Caco-2 (cell line): ENCODE measurements at regions of chr17 and their contacts with region 1.

Region 1: DNA sequence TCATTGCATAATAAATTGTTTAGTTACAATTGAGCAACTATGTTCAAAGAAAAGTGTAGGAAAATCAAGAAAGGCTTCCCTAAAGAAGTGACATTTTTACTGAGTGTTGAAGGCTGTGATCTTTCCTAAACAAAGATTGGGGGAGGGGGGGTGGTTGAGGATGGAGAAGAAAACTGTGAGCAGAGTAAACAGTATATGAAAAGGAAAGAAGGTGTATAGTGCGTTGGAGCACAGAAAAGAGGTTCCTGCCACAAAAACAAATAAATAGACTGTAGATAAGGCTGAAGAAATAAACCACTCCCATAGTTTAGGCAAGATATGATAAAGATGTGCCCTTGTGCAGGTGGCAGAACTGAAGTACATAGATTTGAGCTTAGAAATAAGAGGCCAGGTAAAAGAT is 8.5 kb downstream of the ABCA10 start:
- DNase-seq: peak in 1 of 2 experiments; percentile 58
- H3K4me3 ChIP-seq: no peak overlapping the region
- H3K4me3 Mint-ChIP-seq: no peak overlapping the region
- H3K27ac Mint-ChIP-seq: no peak overlapping the region
- H3K4me1 ChIP-seq: no peaks in the 10 kb centered on the region
- H3K4me1 Mint-ChIP-seq: peaks cover 16% of the 10 kb centered on the region
- H3K27me3 ChIP-seq: no peaks in the 10 kb centered on the region
- H3K27me3 Mint-ChIP-seq: no peaks in the 10 kb centered on the region
- CTCF ChIP-seq: no peak

Region 2: DNA sequence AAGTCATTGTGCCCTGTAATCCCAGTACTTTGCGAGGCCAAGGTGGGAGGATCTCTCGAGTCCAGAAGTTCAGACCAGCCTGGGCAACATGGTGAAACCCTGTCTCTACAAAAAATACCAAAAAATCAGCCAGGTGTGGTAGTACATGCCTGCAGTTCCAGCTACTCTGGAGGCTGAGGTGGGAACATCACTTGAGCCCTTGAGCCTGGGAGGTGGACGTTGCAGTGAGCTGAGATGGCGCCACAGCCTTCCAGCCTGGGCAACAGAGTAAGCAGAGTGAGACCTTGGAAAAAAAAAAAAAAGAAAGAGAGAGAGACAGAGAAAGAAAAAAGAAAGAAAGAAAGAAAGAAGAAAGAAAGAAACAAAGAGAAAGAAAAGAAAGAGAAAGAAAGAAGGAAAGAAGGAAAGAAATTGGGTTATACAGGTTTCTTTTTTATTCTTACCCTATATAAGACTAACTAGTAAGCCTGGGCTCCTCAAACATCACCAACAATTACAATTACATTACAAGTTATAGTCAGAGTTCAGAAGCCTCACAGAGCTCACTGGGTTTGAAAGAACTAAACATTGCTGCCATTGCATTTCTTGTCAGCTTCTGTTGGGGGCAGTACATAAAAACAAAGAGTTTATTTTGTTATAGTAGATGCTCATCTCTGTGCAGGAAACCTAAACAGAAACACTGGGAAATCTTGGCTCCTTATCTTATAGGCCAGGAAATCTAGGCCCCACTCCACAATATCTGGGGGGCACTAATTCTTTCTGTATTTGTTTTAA is 152.6 kb before region 1 on chr17:
- CTCF ChIA-PET with region 1: no interaction called
- POLR2A ChIA-PET with region 1: no interaction called
- intact Hi-C with region 1: loop called (anchors 1 kb)
- DNase-seq: no peak
- H3K4me3 ChIP-seq: no peak overlapping the region
- H3K4me3 Mint-ChIP-seq: no peak overlapping the region
- H3K27ac Mint-ChIP-seq: no peak overlapping the region
- H3K4me1 ChIP-seq: peaks cover 20% of the 10 kb centered on the region; the same call in 1 of the 2 replicates
- H3K4me1 Mint-ChIP-seq: peaks cover 36% of the 10 kb centered on the region
- H3K27me3 ChIP-seq: no peaks in the 10 kb centered on the region
- H3K27me3 Mint-ChIP-seq: no peaks in the 10 kb centered on the region
- CTCF ChIP-seq: no peak

Region 3: GRCh38 chr17:69130627-69131296 is 89.3 kb before region 1 on chr17:
- CTCF ChIA-PET with region 1: no interaction called
- POLR2A ChIA-PET with region 1: no interaction called
- intact Hi-C with region 1: no loop called
- DNase-seq: no peak
- H3K4me3 ChIP-seq: no peak overlapping the region
- H3K4me3 Mint-ChIP-seq: no peak overlapping the region
- H3K27ac Mint-ChIP-seq: no peak overlapping the region
- H3K4me1 ChIP-seq: 0 out of 2 replicates have a peak, but pooled peaks cover 5% of the 10 kb centered on the region
- H3K4me1 Mint-ChIP-seq: no peaks in the 10 kb centered on the region
- H3K27me3 ChIP-seq: no peaks in the 10 kb centered on the region
- H3K27me3 Mint-ChIP-seq: no peaks in the 10 kb centered on the region
- CTCF ChIP-seq: no peak

Region 4: GRCh38 chr17:69335058-69335457 is 115.0 kb after region 1 on chr17:
- CTCF ChIA-PET with region 1: no interaction called
- POLR2A ChIA-PET with region 1: no interaction called
- intact Hi-C with region 1: no loop called
- DNase-seq: peak in 1 of 2 experiments; percentile 23
- H3K4me3 ChIP-seq: no peak overlapping the region
- H3K4me3 Mint-ChIP-seq: peak overlapping the region; percentile 46
- H3K27ac Mint-ChIP-seq: no peak overlapping the region
- H3K4me1 ChIP-seq: no peaks in the 10 kb centered on the region
- H3K4me1 Mint-ChIP-seq: peaks cover 6% of the 10 kb centered on the region
- H3K27me3 ChIP-seq: no peaks in the 10 kb centered on the region
- H3K27me3 Mint-ChIP-seq: peaks cover 15% of the 10 kb centered on the region
- CTCF ChIP-seq: peak; percentile 51 to 53